Endothelial cell of umbilical vein (primary cell): ENCODE measurements at regions of chr17 and their contacts with region 1.

Region 1: GRCh38 chr17:82030470-82031302 is 792 bp upstream of the RAC3 start:
- DNase-seq: peak; percentile 81
- H3K4me3 ChIP-seq: peak overlapping the region; percentile 51 to 78 (median 53)
- H3K27ac ChIP-seq: no peak overlapping the region
- H3K4me1 ChIP-seq: peaks cover 10% of the 10 kb centered on the region
- H3K27me3 ChIP-seq: no peaks in the 10 kb centered on the region
- CTCF ChIP-seq: peak; percentile 82 to 98
- POLR2A ChIP-seq: no peak

Region 2: DNA sequence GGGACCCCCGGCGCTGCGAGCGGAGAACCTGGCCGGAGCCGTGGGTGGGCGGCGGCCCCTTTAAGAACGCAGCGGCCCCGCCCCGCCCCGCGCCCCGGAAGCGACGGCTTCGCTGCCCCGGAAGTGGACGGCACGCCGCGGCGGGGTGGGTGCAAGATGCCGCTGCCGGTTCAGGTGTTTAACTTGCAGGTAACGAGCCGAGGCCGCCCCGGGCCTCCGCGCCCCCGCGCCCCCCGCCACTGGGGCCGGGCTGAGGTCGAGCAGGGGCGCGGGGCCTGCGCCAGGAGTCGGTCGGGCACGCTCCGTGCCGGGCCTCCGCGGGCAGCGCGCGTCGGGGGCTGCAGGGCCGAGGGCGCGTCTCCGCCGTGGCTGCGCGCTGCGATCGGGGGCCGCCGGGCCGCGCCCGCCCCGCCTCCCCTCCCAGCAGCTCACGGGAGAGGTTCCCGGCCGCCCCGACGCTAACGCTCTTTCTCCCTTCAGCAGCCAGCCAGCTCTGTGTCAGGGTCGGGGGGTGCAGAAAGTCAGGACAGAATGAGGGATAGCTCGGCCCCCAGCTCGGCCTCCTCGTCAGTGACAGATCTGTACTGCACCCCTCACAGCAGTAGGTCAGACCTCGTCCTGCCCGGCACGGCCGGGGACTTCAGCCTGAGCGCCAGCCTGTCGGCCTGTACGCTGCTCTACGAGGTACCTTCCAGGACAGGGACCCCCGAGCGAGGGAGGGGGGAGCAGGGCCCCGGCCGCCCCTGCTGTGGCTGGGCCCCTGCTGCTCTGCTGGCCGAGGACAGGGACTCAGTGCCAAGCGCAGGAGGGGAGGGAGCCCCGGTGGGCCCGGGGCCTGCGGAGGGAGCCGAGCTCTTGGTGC is 21.3 kb after region 1 on chr17 and contains the starts of genes GPS1 and RFNG:
- CTCF ChIA-PET with region 1: interaction called, 19 read pairs
- POLR2A ChIA-PET with region 1: no interaction called
- dilution Hi-C with region 1: no loop called
- intact Hi-C with region 1: no loop called
- DNase-seq: peak; percentile 33
- H3K4me3 ChIP-seq: peak within 1 kb of the TSS; percentile 65 to 89 (median 76)
- H3K27ac ChIP-seq: no peak within 1 kb of the TSS
- H3K4me1 ChIP-seq: peaks cover 11% of the 10 kb centered on the region
- H3K27me3 ChIP-seq: no peaks in the 10 kb centered on the region
- CTCF ChIP-seq: no peak
- POLR2A ChIP-seq: no peak
- total RNA-seq, gene GPS1: 96.6 and 116 TPM in 2 replicates
- total RNA-seq, gene RFNG: 33.7 and 36.9 TPM in 2 replicates

Region 3: DNA sequence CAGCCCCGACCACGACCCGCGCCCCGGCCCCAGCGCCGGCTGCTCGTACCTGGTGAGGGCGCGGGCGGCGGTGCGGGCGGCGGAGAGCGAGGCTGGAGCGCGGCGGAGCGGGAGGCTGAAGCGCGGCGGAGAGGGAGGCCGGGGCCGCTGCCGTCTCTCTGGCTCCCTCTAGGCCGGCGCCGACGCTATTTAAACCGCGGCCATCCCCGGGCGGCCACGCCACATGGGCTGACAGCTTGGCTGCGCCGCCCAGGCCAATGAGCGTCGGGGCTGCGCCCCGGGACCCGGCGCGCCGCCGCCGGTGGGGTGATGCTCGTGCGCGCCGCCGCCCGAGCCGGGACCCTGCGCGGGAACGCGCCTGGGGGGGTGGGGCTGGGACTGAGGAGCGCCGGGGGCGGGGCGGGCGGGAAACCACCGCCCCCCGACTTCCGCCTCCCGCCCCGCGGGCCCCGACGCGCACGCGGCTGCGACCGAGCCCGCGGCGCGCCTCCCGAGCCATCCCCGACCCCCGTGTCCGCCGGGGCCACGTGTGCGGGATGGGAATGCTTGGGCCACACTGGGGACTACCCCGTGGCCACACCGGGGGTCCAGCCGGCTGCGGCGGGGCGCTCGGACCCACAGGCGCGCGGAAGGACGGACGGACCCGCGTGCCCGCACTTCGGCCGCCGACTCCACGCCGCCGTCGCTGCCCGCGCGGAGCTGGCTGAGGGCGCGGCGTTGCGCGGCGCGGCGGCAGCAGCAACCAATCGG is 67.6 kb after region 1 on chr17 and contains the start of gene FASN:
- CTCF ChIA-PET with region 1: interaction called, 15 read pairs
- POLR2A ChIA-PET with region 1: no interaction called
- dilution Hi-C with region 1: no loop called
- intact Hi-C with region 1: loop called (anchors 2 kb)
- DNase-seq: peak; percentile 93
- H3K4me3 ChIP-seq: peak within 1 kb of the TSS; percentile 35 to 78 (median 54)
- H3K27ac ChIP-seq: peak within 1 kb of the TSS; percentile 76
- H3K4me1 ChIP-seq: peaks cover 20% of the 10 kb centered on the region
- H3K27me3 ChIP-seq: no peaks in the 10 kb centered on the region
- CTCF ChIP-seq: peak; percentile 25 to 56
- POLR2A ChIP-seq: peak; percentile 87
- total RNA-seq, gene FASN: 351 and 360 TPM in 2 replicates

Region 4: GRCh38 chr17:82126556-82127314 is 96.0 kb after region 1 on chr17:
- CTCF ChIA-PET with region 1: no interaction called
- POLR2A ChIA-PET with region 1: no interaction called
- dilution Hi-C with region 1: no loop called
- intact Hi-C with region 1: no loop called
- DNase-seq: no peak
- H3K4me3 ChIP-seq: no peak overlapping the region
- H3K27ac ChIP-seq: no peak overlapping the region
- H3K4me1 ChIP-seq: no peaks in the 10 kb centered on the region
- H3K27me3 ChIP-seq: no peaks in the 10 kb centered on the region
- CTCF ChIP-seq: no peak
- POLR2A ChIP-seq: no peak

Region 5: DNA sequence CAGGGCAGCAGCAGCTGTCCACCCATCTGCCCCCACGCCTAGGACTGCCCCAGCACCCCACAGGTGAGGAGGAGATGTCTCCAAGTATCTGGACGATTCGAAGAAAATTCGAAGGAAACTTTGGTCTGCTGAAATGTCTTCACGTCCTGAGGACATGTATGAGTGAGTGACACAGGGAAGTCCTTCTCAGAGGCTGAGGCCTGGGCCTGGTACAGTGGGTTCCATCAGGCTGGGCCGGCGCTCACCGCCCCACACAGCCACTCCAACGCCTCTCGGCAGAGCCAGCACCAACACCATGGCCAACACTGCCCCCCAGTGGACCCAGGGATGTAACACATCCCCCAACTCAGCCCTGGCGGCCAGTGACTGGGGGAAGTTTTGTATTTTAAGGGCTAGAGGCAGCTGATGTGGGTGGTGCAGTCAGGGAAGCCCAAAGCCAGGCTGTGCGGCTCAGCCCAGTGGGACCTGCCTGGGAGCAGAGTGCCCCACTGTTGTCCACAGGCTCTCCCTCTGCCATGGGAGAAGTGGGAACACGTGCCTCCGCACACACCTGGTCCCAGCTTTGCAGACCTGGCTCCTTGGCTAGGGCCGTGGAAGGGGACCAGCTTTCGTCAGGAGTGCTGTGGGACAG is 123.2 kb after region 1 on chr17:
- CTCF ChIA-PET with region 1: interaction called, 127 read pairs
- POLR2A ChIA-PET with region 1: no interaction called
- dilution Hi-C with region 1: no loop called
- intact Hi-C with region 1: loop called (anchors 1 kb)
- DNase-seq: peak; percentile 56
- H3K4me3 ChIP-seq: no peak overlapping the region
- H3K27ac ChIP-seq: no peak overlapping the region
- H3K4me1 ChIP-seq: no peaks in the 10 kb centered on the region
- H3K27me3 ChIP-seq: no peaks in the 10 kb centered on the region
- CTCF ChIP-seq: peak; percentile 72 to 92
- POLR2A ChIP-seq: no peak

Region 6: GRCh38 chr17:82236142-82236981 is 205.7 kb after region 1 on chr17:
- CTCF ChIA-PET with region 1: interaction called, 30 read pairs
- POLR2A ChIA-PET with region 1: no interaction called
- dilution Hi-C with region 1: no loop called
- intact Hi-C with region 1: loop called (anchors 10 kb)
- DNase-seq: peak; percentile 45
- H3K4me3 ChIP-seq: no peak overlapping the region
- H3K27ac ChIP-seq: no peak overlapping the region
- H3K4me1 ChIP-seq: peaks cover 21% of the 10 kb centered on the region
- H3K27me3 ChIP-seq: no peaks in the 10 kb centered on the region
- CTCF ChIP-seq: peak; percentile 80 to 91
- POLR2A ChIP-seq: no peak